Activated B cell treated with CpG ODN at 0.5 μM for 24 hours (primary cell): ENCODE measurements at regions of chr5 and their contacts with region 1.

Region 1: DNA sequence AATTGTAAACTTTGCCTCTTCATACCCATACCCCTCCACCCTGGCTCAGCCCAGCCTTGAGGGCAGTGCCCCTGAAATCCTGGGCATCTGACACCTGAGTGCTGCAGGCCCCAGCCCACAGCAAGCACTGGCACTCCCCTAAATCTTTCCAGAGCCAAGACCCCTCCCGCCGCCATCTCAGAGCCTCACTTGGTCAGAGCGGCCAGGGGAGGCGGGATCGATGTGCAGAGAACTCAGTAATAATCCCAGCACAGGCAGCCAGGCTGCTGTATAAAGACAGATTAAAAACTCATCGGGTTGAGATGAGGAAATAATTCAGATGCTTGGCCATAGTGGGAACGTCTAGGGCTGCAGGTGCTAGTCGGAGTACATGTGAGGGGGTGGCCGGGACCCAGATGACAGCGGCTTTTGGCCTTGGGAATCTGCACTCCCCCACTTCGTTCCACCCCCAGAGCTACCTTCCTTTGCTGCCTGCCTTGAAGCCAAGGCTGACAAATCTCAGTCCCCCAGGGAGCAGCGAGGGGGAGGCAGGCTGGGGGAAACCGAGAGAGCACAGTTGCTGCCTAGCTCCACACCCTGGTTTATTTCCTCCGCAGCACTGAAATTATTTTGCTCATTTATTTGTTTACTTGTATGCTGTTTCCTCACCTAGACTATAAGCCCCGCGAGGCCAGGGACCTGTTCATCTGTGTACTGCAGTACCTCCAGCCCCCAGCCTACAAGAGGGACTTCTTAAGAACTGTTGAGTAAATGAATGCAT is 19.5 kb upstream of the ARAP3 start:
- DNase-seq: peak; percentile 26
- ATAC-seq: peak; percentile 73
- H3K4me3 Mint-ChIP-seq: no peak overlapping the region
- H3K27ac Mint-ChIP-seq: no peak overlapping the region
- H3K4me1 Mint-ChIP-seq: peaks cover 20% of the 10 kb centered on the region
- H3K27me3 Mint-ChIP-seq: peaks cover 57% of the 10 kb centered on the region
- CTCF ChIP-seq: no peak

Region 2: GRCh38 chr5:141825791-141826560 is 124.4 kb after region 1 on chr5:
- CTCF ChIA-PET with region 1: interaction called, 3 read pairs
- POLR2A ChIA-PET with region 1: interaction called, 3 read pairs
- intact Hi-C with region 1: loop called (anchors 1 kb)
- DNase-seq: no peak
- ATAC-seq: no peak
- H3K4me3 Mint-ChIP-seq: no peak overlapping the region
- H3K27ac Mint-ChIP-seq: no peak overlapping the region
- H3K4me1 Mint-ChIP-seq: no peaks in the 10 kb centered on the region
- H3K27me3 Mint-ChIP-seq: peaks cover 10% of the 10 kb centered on the region
- CTCF ChIP-seq: no peak

Region 3: GRCh38 chr5:141849375-141850243 is 148.1 kb after region 1 on chr5:
- CTCF ChIA-PET with region 1: no interaction called
- POLR2A ChIA-PET with region 1: no interaction called
- intact Hi-C with region 1: loop called (anchors 1 kb)
- DNase-seq: peak; percentile 66
- ATAC-seq: peak; percentile 84
- H3K4me3 Mint-ChIP-seq: peak overlapping the region; percentile 87
- H3K27ac Mint-ChIP-seq: peak overlapping the region; percentile 53
- H3K4me1 Mint-ChIP-seq: peaks cover 9% of the 10 kb centered on the region
- H3K27me3 Mint-ChIP-seq: peaks cover 11% of the 10 kb centered on the region
- CTCF ChIP-seq: no peak

Region 4: DNA sequence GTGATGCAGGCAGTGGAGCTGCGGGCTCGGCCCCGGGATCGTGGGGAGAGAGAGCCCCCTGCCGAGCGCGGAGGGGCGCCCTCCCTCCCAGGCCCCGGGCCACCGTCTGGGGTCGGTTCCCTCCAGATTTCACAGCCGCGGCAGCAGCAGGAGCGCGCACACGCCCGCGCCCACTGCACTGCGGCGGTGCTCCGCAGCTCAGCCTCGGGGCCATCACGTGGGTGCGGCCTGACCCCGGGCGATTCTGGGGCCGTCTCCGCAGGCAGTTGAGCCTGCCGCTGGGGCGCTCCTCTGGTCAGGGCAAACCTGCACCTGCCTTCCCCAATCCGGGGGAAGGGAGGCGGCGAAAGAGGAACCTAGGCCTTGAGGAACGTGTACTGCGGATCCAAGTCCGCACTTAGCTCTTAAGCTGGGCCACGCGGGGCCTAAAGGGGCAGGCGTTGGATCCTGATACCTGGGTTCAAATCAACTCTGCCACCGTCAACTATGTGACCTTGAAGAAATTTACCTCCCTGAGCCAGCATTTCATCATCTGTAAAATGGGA is 212.7 kb after region 1 on chr5:
- CTCF ChIA-PET with region 1: no interaction called
- POLR2A ChIA-PET with region 1: no interaction called
- intact Hi-C with region 1: loop called (anchors 1 kb)
- DNase-seq: peak; percentile 47
- ATAC-seq: peak; percentile 78
- H3K4me3 Mint-ChIP-seq: peak overlapping the region; percentile 72
- H3K27ac Mint-ChIP-seq: no peak overlapping the region
- H3K4me1 Mint-ChIP-seq: peaks cover 40% of the 10 kb centered on the region
- H3K27me3 Mint-ChIP-seq: peaks cover 8% of the 10 kb centered on the region
- CTCF ChIP-seq: no peak